Sigmoid colon (tissue), 7 donors: ENCODE measurements at regions of chr11 and their contacts with region 1.

Region 1: GRCh38 chr11:65180877-65181568 is 705 bp upstream of the CAPN1 start:
- DNase-seq: peak; percentile 82
- H3K4me3 ChIP-seq: peak overlapping the region; percentile 80 to 97 (median 92)
- H3K27ac ChIP-seq: peak overlapping the region; percentile 90 to 96 (median 92)
- H3K4me1 ChIP-seq: peaks cover 0 to 32% (median 23%) of the 10 kb centered on the region in 4 donors
- H3K27me3 ChIP-seq: no peaks in the 10 kb centered on the region
- CTCF ChIP-seq: peak; percentile 9 to 51 (median 35)
- EP300 ChIP-seq: no peak
- POLR2A ChIP-seq: no peak

Region 2: DNA sequence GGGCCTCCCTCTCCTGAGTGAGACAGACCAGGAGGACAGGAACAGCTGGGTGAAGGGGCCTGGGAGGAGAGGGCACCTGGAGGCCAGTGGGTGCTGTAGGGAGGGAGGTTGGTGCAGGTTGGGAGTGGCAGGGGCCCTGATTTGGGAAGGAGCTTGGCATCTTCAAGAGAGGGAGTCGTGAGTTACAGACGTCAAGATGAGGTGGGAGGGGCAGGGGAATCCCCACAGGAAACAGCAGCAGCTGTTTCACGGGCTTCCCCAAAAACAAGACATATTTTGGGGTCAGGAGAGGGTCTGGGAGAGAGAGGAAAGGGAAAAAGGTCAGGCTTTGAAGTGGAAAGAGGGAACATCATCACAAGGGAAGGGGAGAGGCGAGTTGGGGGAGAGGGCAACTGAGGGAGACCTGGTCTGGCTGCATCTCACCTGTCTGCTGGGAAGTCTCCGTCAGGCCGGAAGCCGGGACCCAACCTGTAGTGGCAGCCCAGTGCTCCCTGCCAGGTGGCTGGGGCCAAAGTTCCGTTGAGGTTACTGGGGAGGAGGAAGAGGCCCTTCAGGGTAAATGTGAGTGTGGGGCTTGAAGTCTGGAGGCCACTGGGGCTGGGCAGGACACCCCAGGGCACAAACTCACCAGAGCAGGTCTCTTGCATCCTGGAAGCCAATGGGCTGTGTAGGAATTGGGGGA is 127.1 kb before region 1 on chr11:
- intact Hi-C with region 1: no loop called
- DNase-seq: no peak
- H3K4me3 ChIP-seq: no peak overlapping the region
- H3K27ac ChIP-seq: no peak overlapping the region
- H3K4me1 ChIP-seq: no peaks in the 10 kb centered on the region
- H3K27me3 ChIP-seq: no peaks in the 10 kb centered on the region
- CTCF ChIP-seq: no peak
- EP300 ChIP-seq: no peak
- POLR2A ChIP-seq: no peak

Region 3: GRCh38 chr11:65111744-65112414 is 69.1 kb before region 1 on chr11 and contains the start of gene TM7SF2:
- intact Hi-C with region 1: loop called (anchors 2 kb)
- DNase-seq: peak; percentile 98
- H3K4me3 ChIP-seq: peak within 1 kb of the TSS; percentile 35 to 58 (median 49)
- H3K27ac ChIP-seq: peak within 1 kb of the TSS; percentile 81 to 85 (median 82)
- H3K4me1 ChIP-seq: peaks cover 0 to 55% (median 47%) of the 10 kb centered on the region in 4 donors
- H3K27me3 ChIP-seq: no peaks in the 10 kb centered on the region
- CTCF ChIP-seq: no peak
- EP300 ChIP-seq: no peak
- POLR2A ChIP-seq: peak; percentile 59 to 80
- total RNA-seq, gene TM7SF2: 15.6 to 20.3 (median 17.5) TPM

Region 4: DNA sequence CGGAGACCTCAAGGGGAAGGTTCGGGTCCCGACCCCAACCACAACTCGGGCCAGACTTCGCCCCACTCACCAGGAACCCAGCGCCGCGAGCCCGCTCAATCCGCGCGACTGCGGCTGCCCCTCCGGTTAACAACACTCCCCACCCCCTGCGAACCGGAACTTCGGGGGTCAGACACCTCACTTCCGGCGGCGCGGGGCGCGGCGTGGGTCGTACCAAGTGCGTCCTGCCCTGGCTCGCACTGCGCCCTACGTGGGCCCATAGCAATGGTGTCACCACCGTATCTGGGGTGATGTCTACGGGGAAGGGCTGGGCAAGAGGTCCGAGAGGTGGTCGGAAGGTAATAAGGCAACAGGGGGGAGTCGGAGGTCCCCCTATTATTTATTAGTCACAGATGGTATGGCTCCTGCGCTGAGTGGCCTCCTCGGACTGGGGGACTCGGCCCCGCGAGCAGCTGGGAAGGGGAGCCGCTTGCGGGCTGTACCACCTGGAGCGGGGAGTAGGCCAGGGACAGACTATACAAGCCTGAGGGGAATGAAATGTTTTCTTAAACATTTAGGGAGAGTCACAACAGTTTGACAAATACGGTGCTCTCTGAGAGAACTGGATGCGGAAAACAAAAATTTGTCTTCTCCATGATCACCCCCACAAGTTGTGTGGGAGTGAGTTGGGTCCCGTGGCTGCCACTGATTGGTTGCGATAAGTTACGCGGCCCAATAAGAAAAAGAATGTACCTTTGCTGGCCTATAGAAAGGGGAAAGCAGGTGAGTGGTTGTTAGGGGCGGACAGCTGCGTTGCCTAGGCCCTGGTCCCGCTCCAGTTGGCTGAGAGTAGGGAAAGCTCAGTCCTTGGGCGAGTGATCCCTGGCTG is 46.4 kb before region 1 on chr11 and contains the start of gene SYVN1:
- intact Hi-C with region 1: loop called (anchors 2 kb)
- DNase-seq: peak; percentile 98
- H3K4me3 ChIP-seq: peak within 1 kb of the TSS; percentile 83 to 93 (median 90)
- H3K27ac ChIP-seq: peak within 1 kb of the TSS; percentile 94 to 98 (median 96)
- H3K4me1 ChIP-seq: peaks cover 0 to 31% (median 25%) of the 10 kb centered on the region in 4 donors
- H3K27me3 ChIP-seq: no peaks in the 10 kb centered on the region
- CTCF ChIP-seq: no peak
- EP300 ChIP-seq: peak in 1 of 4 donors; percentile 40
- POLR2A ChIP-seq: peak; percentile 97 to 98
- total RNA-seq, gene SYVN1: 17.1 to 36.0 (median 24.3) TPM